K562 (cell line): ENCODE measurements at regions of chrX and their contacts with region 1.

Region 1: GRCh38 chrX:17590892-17591740 is 146.2 kb upstream of the SCML1 start:
- DNase-seq: peak; percentile 21 to 36 (median 26)
- ATAC-seq: peak; percentile 82
- H3K4me3 ChIP-seq: no peak overlapping the region
- H3K27ac ChIP-seq: no peak overlapping the region
- H3K4me1 ChIP-seq: no peaks in the 10 kb centered on the region
- H3K27me3 ChIP-seq: no peaks in the 10 kb centered on the region
- CTCF ChIP-seq: peak; percentile 52 to 64 (median 59)
- EP300 ChIP-seq: no peak
- POLR2A ChIP-seq: no peak
- RAD21 ChIP-seq: peak; percentile 42 to 57; a peak in 3 of 4 replicates

Region 2: DNA sequence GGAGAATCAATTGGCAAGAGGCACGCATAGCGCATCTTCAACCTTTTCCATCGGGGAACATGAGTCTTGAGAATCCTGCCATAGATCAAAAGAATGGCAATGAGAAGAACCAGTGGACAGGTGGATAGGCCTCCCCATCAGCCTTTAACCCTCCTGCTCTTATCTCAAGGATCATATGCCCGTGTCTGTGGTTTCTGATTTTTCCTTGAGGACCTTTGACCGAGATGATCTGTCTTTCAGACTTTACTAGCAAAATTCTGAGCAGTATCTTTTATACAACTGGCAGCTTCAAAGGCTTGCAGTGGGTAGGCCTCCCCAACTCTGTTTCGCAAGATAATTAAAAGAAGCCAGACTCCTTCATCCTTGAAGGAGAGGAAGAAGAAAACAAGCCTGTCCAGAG is 470.3 kb before region 1 on chrX:
- CTCF ChIA-PET with region 1: no interaction called
- POLR2A ChIA-PET with region 1: no interaction called
- in situ Hi-C with region 1: no loop called
- intact Hi-C with region 1: loop called (anchors 5 kb)
- DNase-seq: no peak
- ATAC-seq: no peak
- H3K4me3 ChIP-seq: no peak overlapping the region
- H3K27ac ChIP-seq: no peak overlapping the region
- H3K4me1 ChIP-seq: no peaks in the 10 kb centered on the region
- H3K27me3 ChIP-seq: no peaks in the 10 kb centered on the region
- CTCF ChIP-seq: no peak
- EP300 ChIP-seq: no peak
- POLR2A ChIP-seq: no peak
- RAD21 ChIP-seq: no peak

Region 3: DNA sequence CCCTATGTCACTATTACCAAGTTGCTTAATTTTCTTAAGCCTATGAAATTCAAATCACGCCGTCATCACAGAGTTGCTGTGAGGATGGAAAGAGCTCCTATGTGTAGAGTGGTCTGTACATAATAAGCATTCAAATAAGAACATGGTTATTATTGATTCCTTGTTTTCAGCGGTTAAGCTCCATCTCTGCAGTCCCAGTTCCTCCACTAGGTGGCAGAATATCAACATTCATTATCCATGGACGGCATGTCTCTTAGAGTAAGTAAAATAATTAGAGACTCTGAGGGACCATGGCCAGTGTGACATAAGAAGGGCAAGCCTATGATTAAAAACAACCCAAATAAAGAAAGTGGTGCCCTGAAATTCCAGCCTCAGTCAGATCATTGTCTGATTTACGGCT is 348.6 kb before region 1 on chrX:
- CTCF ChIA-PET with region 1: no interaction called
- POLR2A ChIA-PET with region 1: no interaction called
- in situ Hi-C with region 1: no loop called
- intact Hi-C with region 1: loop called (anchors 1 kb)
- DNase-seq: peak; percentile 33 to 43 (median 37)
- ATAC-seq: peak; percentile 77
- H3K4me3 ChIP-seq: no peak overlapping the region
- H3K27ac ChIP-seq: no peak overlapping the region
- H3K4me1 ChIP-seq: no peaks in the 10 kb centered on the region
- H3K27me3 ChIP-seq: no peaks in the 10 kb centered on the region
- CTCF ChIP-seq: peak; percentile 40 to 68 (median 57); a peak in 5 of 6 replicates
- EP300 ChIP-seq: no peak
- POLR2A ChIP-seq: no peak
- RAD21 ChIP-seq: peak in 1 of 2 experiments; percentile 66; a peak in 3 of 4 replicates

Region 4: GRCh38 chrX:17380221-17380620 is 210.9 kb before region 1 on chrX:
- CTCF ChIA-PET with region 1: no interaction called
- POLR2A ChIA-PET with region 1: no interaction called
- in situ Hi-C with region 1: no loop called
- intact Hi-C with region 1: no loop called
- DNase-seq: no peak
- ATAC-seq: no peak
- H3K4me3 ChIP-seq: no peak overlapping the region
- H3K27ac ChIP-seq: no peak overlapping the region
- H3K4me1 ChIP-seq: no peaks in the 10 kb centered on the region
- H3K27me3 ChIP-seq: peaks cover 0 to 12% of the 10 kb centered on the region in 2 experiments; a peak in 2 of 5 replicates
- CTCF ChIP-seq: no peak
- EP300 ChIP-seq: no peak
- POLR2A ChIP-seq: no peak
- RAD21 ChIP-seq: no peak

Region 5: DNA sequence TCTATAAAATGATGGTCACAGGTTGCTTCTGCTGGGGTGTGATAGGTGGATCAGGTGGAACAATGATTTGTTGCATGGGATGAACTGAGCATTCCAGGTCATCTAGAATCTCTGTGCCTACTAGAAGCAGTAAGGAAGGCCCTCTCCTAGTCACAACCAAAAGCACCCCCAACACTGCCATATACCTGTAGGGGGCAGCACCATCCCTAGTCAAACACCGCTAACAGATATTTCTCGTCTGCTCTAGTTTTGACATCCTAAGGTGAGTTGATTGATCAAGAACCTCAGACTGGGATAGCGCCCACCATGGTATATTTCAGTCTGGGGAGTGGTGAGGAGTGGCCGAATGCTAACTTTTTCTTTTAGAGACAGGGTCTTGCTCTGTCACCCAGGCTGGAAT is 55.9 kb before region 1 on chrX:
- CTCF ChIA-PET with region 1: interaction called, 5 read pairs
- POLR2A ChIA-PET with region 1: no interaction called
- in situ Hi-C with region 1: no loop called
- intact Hi-C with region 1: loop called (anchors 1 kb)
- DNase-seq: peak; percentile 35 to 43 (median 41)
- ATAC-seq: peak; percentile 84
- H3K4me3 ChIP-seq: no peak overlapping the region
- H3K27ac ChIP-seq: no peak overlapping the region
- H3K4me1 ChIP-seq: no peaks in the 10 kb centered on the region
- H3K27me3 ChIP-seq: no peaks in the 10 kb centered on the region
- CTCF ChIP-seq: peak; percentile 52 to 60 (median 55)
- EP300 ChIP-seq: no peak
- POLR2A ChIP-seq: no peak
- RAD21 ChIP-seq: peak; percentile 24 to 43; a peak in 3 of 4 replicates